Heart left ventricle (tissue), 16 donors: ENCODE measurements at regions of chr11 and their contacts with region 1.

Region 1: GRCh38 chr11:65773784-65774411 is 6.9 kb downstream of the AP5B1 start:
- DNase-seq: no peak
- ATAC-seq: no peak
- H3K4me3 ChIP-seq: no peak overlapping the region
- H3K27ac ChIP-seq: no peak overlapping the region
- H3K4me1 ChIP-seq: peaks cover 0 to 59% (median 0%) of the 10 kb centered on the region in 12 donors
- H3K27me3 ChIP-seq: no peaks in the 10 kb centered on the region
- CTCF ChIP-seq: no peak
- POLR2A ChIP-seq: no peak

Region 2: DNA sequence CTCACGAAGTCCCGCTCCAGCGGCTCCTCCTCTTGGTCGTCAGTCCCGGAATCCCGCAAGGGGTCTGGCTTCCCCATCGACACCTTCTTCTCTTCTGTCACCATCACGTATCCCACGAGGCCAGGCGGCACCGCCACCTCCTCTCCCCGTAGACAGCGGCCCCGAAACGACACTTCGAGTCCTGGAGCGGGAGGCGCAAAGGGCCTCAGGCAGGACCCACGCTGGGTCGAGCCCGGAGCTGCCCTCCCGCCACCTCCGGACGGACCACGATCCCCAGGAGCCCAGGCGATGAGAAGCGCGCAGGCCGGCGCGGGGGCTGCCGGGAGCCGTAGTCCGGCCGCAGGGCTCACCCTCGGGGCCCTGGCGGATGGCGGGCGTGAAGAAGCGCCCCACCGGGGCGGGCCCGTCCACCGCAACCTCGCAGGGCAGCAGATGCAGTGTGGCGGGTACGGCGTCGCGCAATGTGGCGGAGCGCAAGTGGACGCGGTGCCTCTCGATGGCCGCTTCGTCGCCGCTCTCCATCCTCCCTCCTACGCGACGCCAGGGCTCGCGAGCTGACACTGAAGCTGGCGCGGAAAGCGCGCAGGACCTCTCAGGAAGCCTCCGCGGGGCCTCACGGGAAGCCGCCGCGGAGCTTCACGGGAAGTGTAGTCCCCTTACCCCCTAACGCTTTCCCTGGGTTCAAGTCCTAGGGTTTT is 53.5 kb before region 1 on chr11 and contains the start of gene RNASEH2C:
- intact Hi-C with region 1: loop called in 1 of 10 experiments (anchors 5 kb)
- DNase-seq: peak; percentile 87 to 92 (median 87)
- ATAC-seq: peak; percentile 85 to 96 (median 96)
- H3K4me3 ChIP-seq: peak within 1 kb of the TSS; percentile 48 to 97 (median 80)
- H3K27ac ChIP-seq: peak within 1 kb of the TSS; percentile 63 to 96 (median 90)
- H3K4me1 ChIP-seq: peaks cover 8 to 30% (median 16%) of the 10 kb centered on the region in 12 donors
- H3K27me3 ChIP-seq: no peaks in the 10 kb centered on the region
- CTCF ChIP-seq: peak in 1 of 12 donors; percentile 30
- POLR2A ChIP-seq: peak in 1 of 2 donors; percentile 90
- total RNA-seq, gene RNASEH2C: 31.7 to 131 (median 44.6) TPM

Region 3: GRCh38 chr11:65730484-65730883 is 43.4 kb before region 1 on chr11:
- intact Hi-C with region 1: loop called in 1 of 10 experiments (anchors 5 kb)
- DNase-seq: no peak
- ATAC-seq: no peak
- H3K4me3 ChIP-seq: no peak overlapping the region
- H3K27ac ChIP-seq: no peak overlapping the region
- H3K4me1 ChIP-seq: no peaks in the 10 kb centered on the region
- H3K27me3 ChIP-seq: no peaks in the 10 kb centered on the region
- CTCF ChIP-seq: no peak
- POLR2A ChIP-seq: no peak

Region 4: DNA sequence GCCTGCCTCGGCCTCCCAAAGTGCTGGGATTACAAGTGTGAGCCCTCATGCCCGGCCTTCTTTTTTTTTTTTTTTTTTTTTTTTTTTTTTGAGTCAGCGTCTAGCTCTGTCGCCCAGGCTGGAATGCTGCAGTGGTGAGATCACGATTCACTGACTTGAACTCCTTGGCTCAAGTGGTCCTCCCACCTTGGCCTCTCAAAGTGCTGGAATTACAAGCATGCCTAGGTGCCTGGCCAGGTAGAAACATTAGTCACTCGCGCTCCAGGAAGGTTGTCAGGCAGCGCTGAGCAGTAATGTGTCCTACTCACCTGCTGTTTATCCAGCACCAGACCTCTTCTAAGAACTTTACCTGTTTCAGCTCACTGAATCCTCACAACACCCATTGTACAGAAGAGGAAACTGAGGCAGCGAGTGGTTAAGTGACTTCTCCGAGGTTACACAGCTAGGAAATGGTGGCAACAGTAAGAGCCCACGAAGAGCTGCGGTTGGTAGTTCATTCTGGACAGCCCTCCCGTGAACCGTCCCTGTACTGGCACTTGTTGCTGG is 237.4 kb after region 1 on chr11:
- intact Hi-C with region 1: no loop called
- DNase-seq: no peak
- ATAC-seq: no peak
- H3K4me3 ChIP-seq: peak overlapping the region in 4 of 12 donors; percentile 25 to 39 (median 32)
- H3K27ac ChIP-seq: no peak overlapping the region
- H3K4me1 ChIP-seq: peaks cover 0 to 27% (median 7%) of the 10 kb centered on the region in 12 donors
- H3K27me3 ChIP-seq: peaks cover 9 to 29% (median 16%) of the 10 kb centered on the region in 9 donors
- CTCF ChIP-seq: no peak
- POLR2A ChIP-seq: no peak